ENCODE measurements at regions of chr3 and their contacts with region 1.

Region 1: DNA sequence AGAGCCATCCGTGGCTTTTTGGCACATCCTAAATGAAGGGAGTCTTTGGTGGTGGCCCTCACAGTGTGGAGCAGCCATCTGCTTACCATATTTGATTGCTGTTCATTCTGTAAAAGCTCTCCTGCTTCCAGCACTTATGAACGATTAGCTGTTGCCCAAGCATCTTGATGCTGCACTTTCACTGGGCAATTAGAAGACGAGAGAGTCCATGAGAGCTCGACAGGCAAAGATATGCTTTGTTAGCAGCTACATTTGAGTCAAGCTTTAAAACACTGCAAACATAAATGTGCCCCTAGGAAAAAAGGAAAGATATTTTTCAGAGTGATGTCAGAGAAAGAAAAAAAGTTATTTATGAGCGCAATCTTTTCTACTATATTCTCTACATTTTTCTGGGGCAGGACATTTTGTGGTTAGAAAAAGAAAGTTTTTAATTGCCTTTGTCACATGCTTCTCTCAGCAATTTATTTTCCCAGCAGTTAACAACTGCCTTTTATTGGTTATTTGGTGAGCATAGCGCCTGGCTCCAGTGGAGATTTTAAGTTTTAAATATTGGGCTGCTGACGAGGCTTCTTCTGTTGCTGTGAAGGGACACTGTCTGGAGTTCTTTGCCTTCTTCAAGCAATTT is 468.4 kb downstream of the C3orf38 start:
- DNase-seq: peak; percentile 50
- H3K4me3 ChIP-seq: no peak overlapping the region
- H3K27ac ChIP-seq: peak overlapping the region; percentile 45
- H3K4me1 ChIP-seq: peaks cover 24% of the 10 kb centered on the region
- H3K27me3 ChIP-seq: no peaks in the 10 kb centered on the region
- CTCF ChIP-seq: no peak

Region 2: DNA sequence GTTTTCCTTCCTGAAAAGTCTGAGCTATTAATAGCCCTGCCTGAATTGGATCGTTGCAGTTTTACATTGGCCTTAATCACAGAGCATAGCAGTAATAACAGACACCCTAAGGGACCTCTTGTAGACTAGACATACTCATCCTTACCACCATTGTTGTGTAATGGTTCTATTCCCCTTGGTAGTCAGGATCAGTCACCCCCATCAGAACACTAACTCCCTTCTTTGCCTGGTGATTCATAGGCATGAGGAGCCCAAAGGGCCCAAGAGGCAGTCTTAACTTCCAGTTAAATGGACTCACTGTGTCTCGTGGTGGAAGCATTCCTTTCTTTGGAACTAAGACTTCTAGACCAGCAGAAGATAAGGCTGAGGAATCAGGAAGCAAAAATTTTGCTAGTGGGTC is 579.6 kb before region 1 on chr3:
- CTCF ChIA-PET with region 1: no interaction called
- POLR2A ChIA-PET with region 1: interaction called, 10 read pairs
- intact Hi-C with region 1: no loop called
- DNase-seq: no peak
- H3K4me3 ChIP-seq: no peak overlapping the region
- H3K27ac ChIP-seq: no peak overlapping the region
- H3K4me1 ChIP-seq: peaks cover 3% of the 10 kb centered on the region
- H3K27me3 ChIP-seq: no peaks in the 10 kb centered on the region
- CTCF ChIP-seq: no peak

Region 3: DNA sequence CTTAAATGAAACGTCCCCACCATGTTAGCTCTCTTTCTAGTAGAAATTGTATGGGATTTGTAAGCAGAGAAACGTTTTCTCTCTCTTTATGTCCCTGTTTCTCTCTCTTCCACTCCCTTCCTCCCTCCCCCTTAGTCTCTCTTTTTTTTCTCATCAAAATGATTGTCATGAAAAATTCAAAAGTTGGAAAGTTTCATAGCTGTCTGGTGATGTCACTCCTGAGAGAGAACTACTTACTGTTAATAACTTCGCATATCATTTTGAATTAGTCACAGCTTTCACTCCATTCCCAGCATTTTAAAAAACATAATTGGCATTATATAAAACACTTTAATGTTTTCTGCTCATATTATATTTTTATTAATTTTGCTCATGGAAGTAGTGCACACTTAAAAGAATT is 137.3 kb before region 1 on chr3:
- CTCF ChIA-PET with region 1: no interaction called
- POLR2A ChIA-PET with region 1: no interaction called
- intact Hi-C with region 1: no loop called
- DNase-seq: peak; percentile 69
- H3K4me3 ChIP-seq: no peak overlapping the region
- H3K27ac ChIP-seq: no peak overlapping the region
- H3K4me1 ChIP-seq: peaks cover 16% of the 10 kb centered on the region
- H3K27me3 ChIP-seq: no peaks in the 10 kb centered on the region
- CTCF ChIP-seq: no peak

Region 4: DNA sequence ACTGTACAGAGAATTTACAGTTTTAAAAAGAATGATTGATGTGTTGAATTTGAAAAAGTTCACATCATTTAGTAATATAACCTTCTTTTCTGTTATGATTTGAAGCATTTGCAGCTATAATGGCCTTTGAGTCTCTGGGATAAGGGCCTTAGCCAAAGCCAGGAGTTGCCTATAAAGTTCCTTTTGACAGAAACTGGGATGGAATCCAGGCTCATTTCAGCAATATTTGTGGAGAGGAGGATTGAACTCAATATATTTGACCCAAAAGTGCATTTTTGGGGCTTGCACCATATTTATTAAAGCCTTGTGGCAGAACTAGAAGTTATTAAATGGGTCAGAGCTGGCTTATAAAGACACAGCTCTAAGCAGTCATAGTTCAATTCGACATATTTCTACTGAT is 140.5 kb after region 1 on chr3:
- CTCF ChIA-PET with region 1: no interaction called
- POLR2A ChIA-PET with region 1: no interaction called
- intact Hi-C with region 1: no loop called
- DNase-seq: no peak
- H3K4me3 ChIP-seq: no peak overlapping the region
- H3K27ac ChIP-seq: no peak overlapping the region
- H3K4me1 ChIP-seq: no peaks in the 10 kb centered on the region
- H3K27me3 ChIP-seq: no peaks in the 10 kb centered on the region
- CTCF ChIP-seq: no peak

Region 5: DNA sequence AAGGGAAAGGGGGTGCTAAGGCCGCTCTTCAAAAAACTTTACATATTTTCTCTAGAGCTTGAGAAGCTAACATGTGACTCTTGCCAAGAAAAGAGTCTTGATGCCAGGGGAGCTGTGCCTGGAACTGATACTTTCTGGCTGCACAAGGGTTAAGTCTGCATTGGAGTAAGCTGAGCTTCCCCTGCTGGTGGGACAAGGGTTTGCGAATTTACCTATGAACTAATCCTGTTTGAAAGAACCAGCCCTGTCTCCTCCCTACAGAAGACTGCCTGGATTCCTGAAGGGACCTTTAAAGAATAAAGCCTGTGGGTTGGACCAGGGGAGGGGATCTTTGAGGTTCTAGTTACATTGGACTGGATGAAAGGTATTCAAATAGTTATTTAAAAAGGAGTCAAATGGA is 431.0 kb after region 1 on chr3:
- CTCF ChIA-PET with region 1: no interaction called
- POLR2A ChIA-PET with region 1: no interaction called
- intact Hi-C with region 1: no loop called
- DNase-seq: peak; percentile 60
- H3K4me3 ChIP-seq: no peak overlapping the region
- H3K27ac ChIP-seq: no peak overlapping the region
- H3K4me1 ChIP-seq: peaks cover 8% of the 10 kb centered on the region
- H3K27me3 ChIP-seq: no peaks in the 10 kb centered on the region
- CTCF ChIP-seq: peak; percentile 46